ENCODE measurements at regions of chr14 and their contacts with region 1.

Region 1: DNA sequence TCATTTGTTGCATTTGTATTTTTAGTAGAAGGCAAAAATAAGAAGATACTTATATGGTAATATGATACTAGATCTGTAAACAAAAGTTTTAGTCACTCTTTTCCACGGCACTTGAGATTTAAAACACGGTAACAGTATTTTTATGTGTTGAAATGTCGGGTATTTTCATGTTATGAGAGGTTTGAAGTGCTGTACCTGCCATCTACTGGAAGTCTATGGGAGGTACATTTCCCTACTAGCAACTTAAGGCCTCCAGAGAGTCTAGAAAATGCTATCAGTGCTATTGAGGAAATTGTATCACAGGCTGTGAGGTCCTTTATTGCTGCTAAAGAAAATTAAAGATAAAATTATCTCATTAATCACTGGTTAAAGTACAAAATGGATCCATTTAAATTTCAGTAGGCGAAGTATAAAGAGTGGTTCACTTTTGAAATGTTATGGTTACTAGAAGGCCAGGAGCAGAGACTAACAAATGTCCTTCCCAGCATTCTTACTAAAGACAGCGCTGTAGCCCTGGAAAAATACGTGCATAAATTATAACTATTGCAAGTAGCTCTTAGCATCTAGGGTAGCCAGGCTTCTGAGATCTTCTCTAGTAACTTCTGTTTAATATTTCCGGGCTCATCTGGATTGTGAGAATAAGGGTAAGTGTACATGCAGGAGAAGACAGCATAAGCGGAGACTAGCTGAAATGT is 77.6 kb upstream of the PRKD1 start:
- DNase-seq: no peak
- H3K4me3 ChIP-seq: peak overlapping the region in 4 of 59 donors; percentile 2 to 19 (median 8)
- H3K27ac ChIP-seq: no peak overlapping the region
- H3K27me3 ChIP-seq: no peaks in the 10 kb centered on the region
- CTCF ChIP-seq: peak; percentile 21 to 88 (median 74)

Region 2: DNA sequence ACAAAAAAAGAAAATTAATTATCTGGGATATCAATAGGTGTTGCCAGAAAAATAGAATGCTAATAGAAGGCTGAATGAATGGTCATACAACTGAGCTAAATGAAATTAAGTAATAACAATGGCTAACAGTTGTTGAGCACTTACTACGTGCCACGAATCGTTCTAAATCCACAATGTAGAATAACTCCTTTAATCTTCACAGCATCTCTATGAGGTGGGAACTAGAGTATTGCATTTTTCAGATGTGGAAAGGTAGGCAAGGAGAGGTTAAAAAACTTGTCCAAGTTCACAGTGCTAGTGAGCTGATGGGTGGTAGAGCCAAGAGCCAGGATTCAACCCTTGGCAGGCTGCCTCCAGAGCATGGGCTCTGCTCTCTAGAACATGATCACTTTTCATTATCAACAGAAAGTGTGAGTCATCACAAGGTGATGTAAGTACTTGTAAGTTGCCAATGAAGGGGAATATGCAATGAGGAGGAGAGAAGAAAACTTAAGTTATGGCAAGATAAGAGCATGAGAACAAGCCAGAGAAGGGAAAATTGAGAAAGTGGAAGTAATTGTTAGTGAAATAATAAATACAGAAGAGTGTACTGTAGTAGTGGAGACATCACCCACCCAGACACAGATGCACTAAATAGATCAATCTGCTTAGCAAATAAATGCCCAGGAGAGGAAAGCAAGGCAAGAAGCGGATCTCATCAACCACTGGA is 199.7 kb before region 1 on chr14:
- intact Hi-C with region 1: loop called in 1 of 2 experiments (anchors 10 kb)
- DNase-seq: no peak
- H3K4me3 ChIP-seq: no peak overlapping the region
- H3K27ac ChIP-seq: no peak overlapping the region
- H3K27me3 ChIP-seq: no peaks in the 10 kb centered on the region
- CTCF ChIP-seq: no peak